Heart right ventricle (tissue), 16 donors: ENCODE measurements at regions of chr6 and their contacts with region 1.

Region 1: DNA sequence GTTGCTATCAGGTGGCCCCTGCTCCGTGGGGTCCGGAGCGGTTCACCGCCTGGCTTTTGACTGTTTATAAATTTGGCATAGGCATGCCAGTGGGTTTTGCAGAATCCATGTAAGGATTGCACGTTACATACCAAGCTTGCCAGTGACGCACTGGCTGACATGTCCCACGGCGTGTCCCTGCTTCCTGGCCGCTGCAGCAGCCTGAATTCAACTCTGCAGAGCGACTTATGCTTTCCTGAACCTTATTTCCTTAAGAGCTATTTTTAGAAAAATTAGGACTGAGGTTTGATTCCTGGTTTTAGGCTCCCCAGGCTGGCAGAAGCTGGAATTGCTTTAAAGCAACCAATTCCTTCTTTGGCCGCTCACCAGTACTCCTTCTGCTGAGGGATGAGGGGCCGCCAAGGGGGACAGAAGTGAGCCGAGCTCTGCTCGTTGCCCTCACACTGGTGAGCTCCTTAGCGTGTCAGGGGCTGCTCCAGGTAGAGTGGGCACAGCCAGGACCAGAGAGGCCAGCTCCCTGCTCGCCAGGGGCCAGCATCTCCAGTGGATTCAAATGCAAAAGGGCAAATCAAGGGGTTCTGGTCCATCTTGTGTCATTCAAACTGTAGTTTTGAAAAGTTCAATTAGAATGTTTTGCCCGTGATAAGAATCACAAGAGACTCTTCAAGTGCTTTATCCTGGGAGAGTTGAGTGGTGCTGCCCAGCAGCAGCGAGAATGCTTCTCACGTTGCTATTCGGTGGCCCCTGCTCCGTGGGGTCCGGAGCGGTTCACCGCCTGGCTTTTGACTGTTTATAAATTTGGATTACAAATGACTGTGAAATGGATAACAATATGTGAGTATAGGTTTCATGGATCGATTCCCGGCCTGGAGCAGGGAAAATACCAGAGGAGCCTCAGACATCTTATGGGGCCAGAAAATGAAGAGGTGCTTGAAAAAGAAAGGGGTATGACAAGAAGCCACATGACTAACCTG is 17.5 kb upstream of the IRF4 start:
- DNase-seq: no peak
- ATAC-seq: peak; percentile 16 to 63 (median 50)
- H3K4me3 ChIP-seq: no peak overlapping the region
- H3K27ac ChIP-seq: no peak overlapping the region
- H3K4me1 ChIP-seq: peaks cover 0 to 10% (median 7%) of the 10 kb centered on the region in 9 donors
- H3K27me3 ChIP-seq: peaks cover 0 to 80% (median 58%) of the 10 kb centered on the region in 7 donors
- CTCF ChIP-seq: peak in 8 of 9 donors; percentile 10 to 57 (median 37)

Region 2: GRCh38 chr6:188821-189655 is 185.0 kb before region 1 on chr6:
- intact Hi-C with region 1: loop called in 2 of 10 experiments (anchors 2 to 5 kb)
- DNase-seq: peak; percentile 84 to 88
- ATAC-seq: peak; percentile 89 to 96 (median 95)
- H3K4me3 ChIP-seq: no peak overlapping the region
- H3K27ac ChIP-seq: no peak overlapping the region
- H3K4me1 ChIP-seq: peaks cover 0 to 7% (median 0%) of the 10 kb centered on the region in 9 donors
- H3K27me3 ChIP-seq: no peaks in the 10 kb centered on the region
- CTCF ChIP-seq: peak; percentile 72 to 96 (median 90)

Region 3: GRCh38 chr6:227074-227782 is 146.8 kb before region 1 on chr6:
- intact Hi-C with region 1: no loop called
- DNase-seq: no peak
- ATAC-seq: peak in 3 of 8 donors; percentile 26 to 52 (median 45)
- H3K4me3 ChIP-seq: peak overlapping the region in 1 of 10 donors; percentile 8
- H3K27ac ChIP-seq: no peak overlapping the region
- H3K4me1 ChIP-seq: peaks cover 0 to 21% (median 6%) of the 10 kb centered on the region in 9 donors
- H3K27me3 ChIP-seq: peaks cover 0 to 4% (median 0%) of the 10 kb centered on the region in 7 donors
- CTCF ChIP-seq: peak in 5 of 9 donors; percentile 11 to 37 (median 23)